ENCODE measurements at regions of chr12 and their contacts with region 1.

Region 1: DNA sequence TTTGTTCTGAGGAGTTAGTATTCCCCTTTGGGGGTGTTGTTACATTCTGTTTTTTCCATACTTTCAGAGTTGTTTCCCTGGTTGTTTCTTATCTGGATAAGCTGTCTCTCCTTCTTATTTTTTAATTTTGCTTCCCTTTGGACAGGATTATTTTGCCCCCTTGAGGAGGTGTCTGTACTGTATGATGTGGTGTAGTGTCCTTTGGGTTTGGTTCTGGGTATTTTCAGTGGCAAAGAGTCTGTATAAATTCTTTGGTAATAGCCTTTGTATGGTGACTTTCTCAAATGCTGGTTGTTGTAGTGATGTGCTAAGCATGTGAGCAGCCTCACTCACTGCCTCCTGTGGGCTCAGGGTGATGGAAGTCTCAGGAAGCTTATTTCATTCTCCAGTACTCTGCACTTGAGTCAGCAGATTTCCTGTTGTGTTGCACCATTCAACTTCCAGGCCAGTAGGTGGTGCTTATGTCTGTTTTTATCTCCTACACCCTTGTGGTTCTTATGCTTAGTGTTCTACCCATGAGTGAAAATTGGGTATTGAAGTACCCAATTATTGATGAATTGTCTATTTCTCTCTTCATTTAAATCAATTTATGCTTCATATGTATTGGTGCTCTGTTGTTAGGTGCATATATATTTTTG is 103.3 kb upstream of the PMCH start:
- DNase-seq: peak; percentile 80
- H3K4me3 Mint-ChIP-seq: no peak overlapping the region
- H3K27ac Mint-ChIP-seq: no peak overlapping the region
- H3K4me1 Mint-ChIP-seq: peaks cover 18% of the 10 kb centered on the region
- H3K27me3 Mint-ChIP-seq: peaks cover 16% of the 10 kb centered on the region

Region 2: GRCh38 chr12:102169922-102170621 is 130.9 kb before region 1 on chr12:
- intact Hi-C with region 1: loop called (anchors 5 kb)
- DNase-seq: peak; percentile 74
- H3K4me3 Mint-ChIP-seq: no peak overlapping the region
- H3K27ac Mint-ChIP-seq: no peak overlapping the region
- H3K4me1 Mint-ChIP-seq: peaks cover 20% of the 10 kb centered on the region
- H3K27me3 Mint-ChIP-seq: no peaks in the 10 kb centered on the region

Region 3: GRCh38 chr12:102197789-102198188 is 103.2 kb before region 1 on chr12 and contains the start of gene PMCH:
- intact Hi-C with region 1: loop called (anchors 2 kb)
- DNase-seq: no peak
- H3K4me3 Mint-ChIP-seq: peak within 1 kb of the TSS; percentile 35
- H3K27ac Mint-ChIP-seq: peak within 1 kb of the TSS; percentile 87
- H3K4me1 Mint-ChIP-seq: peaks cover 17% of the 10 kb centered on the region
- H3K27me3 Mint-ChIP-seq: no peaks in the 10 kb centered on the region
- total RNA-seq, gene PMCH: 6.3 and 8.4 TPM in 2 replicates

Region 4: GRCh38 chr12:102421801-102422583 is 121.0 kb after region 1 on chr12:
- intact Hi-C with region 1: loop called (anchors 5 kb)
- DNase-seq: peak; percentile 64
- H3K4me3 Mint-ChIP-seq: peak overlapping the region; percentile 0
- H3K27ac Mint-ChIP-seq: peak overlapping the region; percentile 67
- H3K4me1 Mint-ChIP-seq: peaks cover 10% of the 10 kb centered on the region
- H3K27me3 Mint-ChIP-seq: peaks cover 4% of the 10 kb centered on the region

Region 5: GRCh38 chr12:102702447-102703114 is 401.6 kb after region 1 on chr12:
- intact Hi-C with region 1: loop called (anchors 2 kb)
- DNase-seq: peak; percentile 78
- H3K4me3 Mint-ChIP-seq: no peak overlapping the region
- H3K27ac Mint-ChIP-seq: no peak overlapping the region
- H3K4me1 Mint-ChIP-seq: no peaks in the 10 kb centered on the region
- H3K27me3 Mint-ChIP-seq: peaks cover 22% of the 10 kb centered on the region